ENCODE measurements at regions of chr7 and their contacts with region 1.

Region 1: GRCh38 chr7:148727501-148728278 is 29.0 kb downstream of the CUL1 start:
- DNase-seq: no peak

Region 2: GRCh38 chr7:148575640-148576411 is 151.9 kb before region 1 on chr7:
- intact Hi-C with region 1: no loop called
- DNase-seq: peak; percentile 87

Region 3: GRCh38 chr7:148633761-148634160 is 93.9 kb before region 1 on chr7:
- intact Hi-C with region 1: no loop called
- DNase-seq: no peak

Region 4: GRCh38 chr7:148698397-148699023 is 29.2 kb before region 1 on chr7 and contains the start of gene CUL1:
- intact Hi-C with region 1: loop called in 1 of 2 experiments (anchors 1 kb)
- DNase-seq: peak; percentile 95
- total RNA-seq, gene CUL1: 38.3 to 50.2 TPM

Measured in posterior vena cava (tissue), 2 donors.